Mammary epithelial cell (primary cell): ENCODE measurements at regions of chr2 and their contacts with region 1.

Region 1: DNA sequence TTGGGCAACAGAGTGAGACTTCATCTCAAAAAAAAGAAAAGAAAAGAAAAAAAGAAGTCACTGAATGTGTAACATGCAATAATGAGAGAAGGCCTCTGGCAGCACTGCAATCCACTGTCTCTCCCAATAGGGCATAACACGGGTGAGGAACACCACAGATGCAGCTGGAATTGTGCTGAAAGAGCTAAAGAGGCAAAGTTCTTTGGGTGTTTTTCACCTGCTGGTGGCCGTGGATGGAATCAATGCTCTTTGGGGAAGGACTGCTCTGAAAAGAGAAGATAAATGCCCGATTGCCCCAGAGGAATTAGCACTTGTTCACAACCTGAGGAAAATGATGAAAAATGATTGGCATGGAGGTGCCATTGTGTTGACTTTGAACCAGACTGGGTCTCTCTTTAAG is 31.0 kb upstream of the CYBRD1 start:
- DNase-seq: no peak
- H3K4me3 ChIP-seq: no peak overlapping the region
- H3K27ac ChIP-seq: no peak overlapping the region
- H3K4me1 ChIP-seq: no peaks in the 10 kb centered on the region
- H3K27me3 ChIP-seq: no peaks in the 10 kb centered on the region
- CTCF ChIP-seq: no peak

Region 2: GRCh38 chr2:170940066-170940465 is 551.2 kb before region 1 on chr2:
- CTCF ChIA-PET with region 1: no interaction called
- dilution Hi-C with region 1: no loop called
- in situ Hi-C with region 1: no loop called
- intact Hi-C with region 1: no loop called
- DNase-seq: no peak
- H3K4me3 ChIP-seq: no peak overlapping the region
- H3K27ac ChIP-seq: no peak overlapping the region
- H3K4me1 ChIP-seq: no peaks in the 10 kb centered on the region
- H3K27me3 ChIP-seq: no peaks in the 10 kb centered on the region
- CTCF ChIP-seq: no peak

Region 3: DNA sequence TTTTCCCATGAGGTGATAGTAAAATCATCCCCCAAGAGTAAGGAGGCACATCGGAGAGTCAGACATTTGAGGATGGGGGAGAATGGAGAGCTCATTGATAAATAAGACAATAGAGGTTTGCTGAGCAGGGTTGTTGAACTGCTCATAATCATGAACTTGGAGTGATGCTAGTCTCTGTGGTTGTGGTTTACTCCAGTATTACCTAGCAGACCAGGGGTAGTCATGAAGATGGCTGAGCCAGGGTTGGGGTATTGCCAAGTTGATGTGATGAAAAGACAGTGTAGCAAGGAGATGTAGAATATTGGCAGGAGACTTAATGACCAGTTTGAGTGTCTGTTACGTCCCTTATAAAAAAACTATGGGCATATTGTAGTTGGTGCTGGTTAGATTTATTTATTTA is 56.4 kb after region 1 on chr2:
- CTCF ChIA-PET with region 1: no interaction called
- dilution Hi-C with region 1: loop called (anchors 5 kb)
- in situ Hi-C with region 1: no loop called
- intact Hi-C with region 1: no loop called
- DNase-seq: peak; percentile 11
- H3K4me3 ChIP-seq: no peak overlapping the region
- H3K27ac ChIP-seq: no peak overlapping the region
- H3K4me1 ChIP-seq: peaks cover 1% of the 10 kb centered on the region
- H3K27me3 ChIP-seq: no peaks in the 10 kb centered on the region
- CTCF ChIP-seq: no peak